Esophagus muscularis mucosa (tissue), 4 donors: ENCODE measurements at regions of chr17 and their contacts with region 1.

Region 1: DNA sequence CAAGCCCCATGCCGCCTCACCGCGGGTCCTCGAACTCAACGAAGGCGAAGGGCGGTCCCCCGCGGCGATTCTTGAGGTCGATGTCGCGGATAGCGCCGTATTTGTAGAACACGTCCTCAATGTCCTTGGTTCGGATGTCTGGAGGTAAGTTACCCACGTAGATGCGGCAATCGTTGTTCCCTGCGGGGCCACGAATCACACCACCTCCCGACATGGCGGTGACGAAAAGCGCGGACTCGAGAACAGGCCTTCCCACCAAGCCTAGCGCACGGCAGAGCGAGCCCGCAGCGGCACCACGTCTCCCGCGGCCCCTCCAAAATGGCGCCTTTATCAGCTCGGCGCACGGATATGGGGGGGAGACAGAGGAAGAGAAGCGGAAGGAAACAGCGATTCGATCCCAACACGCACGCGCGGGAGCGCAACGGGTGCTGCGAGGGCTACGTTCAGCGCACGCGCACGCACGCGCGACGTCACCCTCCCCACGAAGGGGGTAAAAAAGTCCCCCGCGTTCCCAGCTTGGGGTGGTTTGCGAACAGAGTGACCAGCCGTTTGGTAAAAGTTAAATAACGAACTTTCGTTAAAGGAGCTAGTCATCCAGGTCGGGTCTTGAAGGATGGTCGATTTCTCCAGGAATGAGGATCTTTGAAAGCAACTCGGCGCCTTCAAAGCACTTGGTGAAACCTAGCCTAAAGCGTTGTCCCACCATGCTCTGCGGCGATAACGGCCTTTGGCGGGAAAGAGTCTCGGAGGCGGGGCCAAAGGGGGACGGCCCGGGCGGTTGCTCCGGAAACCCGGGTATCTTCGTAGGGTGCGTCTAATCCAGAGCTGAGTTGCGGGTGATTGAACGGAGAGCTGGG is at the start of gene SRSF1:
- DNase-seq: peak; percentile 98
- H3K4me3 ChIP-seq: peak within 1 kb of the TSS; percentile 80 to 92 (median 88)
- H3K27ac ChIP-seq: peak within 1 kb of the TSS; percentile 94 to 99 (median 96)
- H3K4me1 ChIP-seq: peaks cover 43 to 51% (median 48%) of the 10 kb centered on the region in 4 donors
- H3K27me3 ChIP-seq: no peaks in the 10 kb centered on the region
- CTCF ChIP-seq: no peak
- EP300 ChIP-seq: no peak
- POLR2A ChIP-seq: peak; percentile 93
- total RNA-seq, gene SRSF1: 136 to 185 (median 156) TPM

Region 2: GRCh38 chr17:57121338-57122042 is 885.7 kb before region 1 on chr17:
- intact Hi-C with region 1: loop called (anchors 10 kb)
- DNase-seq: no peak
- H3K4me3 ChIP-seq: no peak overlapping the region
- H3K27ac ChIP-seq: no peak overlapping the region
- H3K4me1 ChIP-seq: peaks cover 0 to 8% (median 4%) of the 10 kb centered on the region in 4 donors
- H3K27me3 ChIP-seq: no peaks in the 10 kb centered on the region
- CTCF ChIP-seq: peak; percentile 30 to 50 (median 35)
- EP300 ChIP-seq: no peak
- POLR2A ChIP-seq: no peak

Region 3: GRCh38 chr17:57662644-57663308 is 344.4 kb before region 1 on chr17:
- intact Hi-C with region 1: loop called (anchors 10 kb)
- DNase-seq: peak; percentile 98
- H3K4me3 ChIP-seq: peak overlapping the region; percentile 29 to 48 (median 40)
- H3K27ac ChIP-seq: peak overlapping the region; percentile 86 to 92 (median 90)
- H3K4me1 ChIP-seq: peaks cover 31 to 61% (median 57%) of the 10 kb centered on the region in 4 donors
- H3K27me3 ChIP-seq: no peaks in the 10 kb centered on the region
- CTCF ChIP-seq: peak in 2 of 3 experiments; percentile 11 to 21
- EP300 ChIP-seq: no peak
- POLR2A ChIP-seq: no peak

Region 4: DNA sequence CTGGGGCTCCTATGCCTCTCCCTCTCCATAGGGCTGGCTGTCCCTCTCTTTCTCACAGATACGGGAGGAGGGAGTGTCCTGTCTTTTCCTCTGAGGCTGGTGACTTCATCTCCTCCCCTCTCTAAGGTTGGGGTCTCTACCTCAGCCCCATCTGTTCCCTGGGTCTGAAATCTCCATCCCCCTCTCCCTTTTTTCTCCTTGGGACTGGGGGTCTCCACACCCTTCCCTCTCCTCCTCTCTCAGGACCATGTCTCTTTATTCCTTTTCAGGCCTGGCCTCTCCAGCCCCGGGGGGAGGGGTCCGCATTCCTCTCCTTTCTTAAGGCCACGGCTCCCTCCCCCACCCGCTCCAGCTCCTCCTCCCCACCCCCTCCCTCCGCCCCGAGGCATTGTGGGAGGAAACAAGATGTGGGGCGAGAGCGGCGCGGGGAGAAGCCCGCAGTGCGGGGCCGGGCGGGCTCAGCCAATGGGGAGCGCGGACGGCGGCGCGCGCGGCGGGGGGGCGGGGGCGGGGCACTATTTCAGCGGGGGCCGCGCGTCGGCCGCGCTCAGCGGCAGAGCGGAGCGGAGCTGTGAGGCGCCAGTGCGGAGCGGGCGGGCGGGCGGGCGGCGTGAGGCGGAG is 75.8 kb after region 1 on chr17 and contains the start of gene DYNLL2:
- intact Hi-C with region 1: loop called (anchors 2 kb)
- DNase-seq: peak; percentile 97
- H3K4me3 ChIP-seq: peak within 1 kb of the TSS; percentile 96 to 100 (median 99)
- H3K27ac ChIP-seq: peak within 1 kb of the TSS; percentile 95 to 99 (median 98)
- H3K4me1 ChIP-seq: peaks cover 40 to 47% (median 43%) of the 10 kb centered on the region in 4 donors
- H3K27me3 ChIP-seq: peaks cover 0 to 6% (median 0%) of the 10 kb centered on the region in 4 donors
- CTCF ChIP-seq: no peak
- EP300 ChIP-seq: no peak
- POLR2A ChIP-seq: no peak
- total RNA-seq, gene DYNLL2: 22.2 to 37.0 (median 36.3) TPM

Region 5: DNA sequence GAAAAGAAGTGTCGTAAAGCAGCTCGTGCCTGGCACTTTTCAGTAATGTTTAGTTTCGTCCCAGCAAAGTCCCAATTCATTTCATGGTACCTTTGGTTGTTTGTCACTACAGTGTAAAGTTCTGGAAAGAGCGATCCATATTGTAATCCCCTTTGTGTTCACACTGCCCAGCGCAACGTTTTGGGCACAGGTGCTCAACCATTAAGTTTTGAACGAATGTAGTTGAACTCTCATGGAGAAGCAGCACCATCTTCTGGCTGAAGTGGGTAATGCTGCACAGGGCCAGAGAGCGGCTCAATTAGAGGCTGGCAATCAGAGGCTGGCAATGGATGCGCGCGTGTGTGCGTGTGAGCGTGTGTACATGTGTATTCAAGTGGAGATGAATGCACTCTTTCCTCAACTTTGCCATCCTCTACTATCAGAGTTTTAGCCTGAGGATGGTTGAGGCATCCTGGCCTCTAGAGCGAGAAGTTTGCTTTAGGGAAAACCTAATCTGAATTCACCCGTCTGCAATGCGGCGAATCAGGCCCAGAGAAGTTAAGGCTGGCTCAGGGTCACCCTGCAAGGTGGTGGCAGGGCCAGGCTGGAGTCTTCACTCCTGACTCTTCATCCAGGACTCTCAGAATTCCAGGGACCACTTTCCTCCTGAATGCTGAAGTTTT is 105.9 kb after region 1 on chr17:
- intact Hi-C with region 1: loop called (anchors 5 kb)
- DNase-seq: peak; percentile 95
- H3K4me3 ChIP-seq: no peak overlapping the region
- H3K27ac ChIP-seq: no peak overlapping the region
- H3K4me1 ChIP-seq: peaks cover 0 to 7% (median 4%) of the 10 kb centered on the region in 4 donors
- H3K27me3 ChIP-seq: peaks cover 0 to 8% (median 0%) of the 10 kb centered on the region in 4 donors
- CTCF ChIP-seq: peak; percentile 93 to 99 (median 95)
- EP300 ChIP-seq: no peak
- POLR2A ChIP-seq: no peak